ENCODE measurements at regions of chr5 and their contacts with region 1.

Region 1: GRCh38 chr5:143279698-143280097 is 123.8 kb downstream of the NR3C1 start:
- DNase-seq: no peak
- ATAC-seq: no peak
- H3K4me3 ChIP-seq: no peak overlapping the region
- H3K27ac ChIP-seq: no peak overlapping the region
- H3K4me1 ChIP-seq: peaks cover 0 to 9% (median 0%) of the 10 kb centered on the region in 12 donors
- H3K27me3 ChIP-seq: no peaks in the 10 kb centered on the region
- CTCF ChIP-seq: no peak
- POLR2A ChIP-seq: no peak

Region 2: GRCh38 chr5:142446131-142446959 is 833.4 kb before region 1 on chr5:
- intact Hi-C with region 1: no loop called
- DNase-seq: no peak
- ATAC-seq: peak; percentile 22 to 62 (median 46)
- H3K4me3 ChIP-seq: no peak overlapping the region
- H3K27ac ChIP-seq: peak overlapping the region in 10 of 12 donors; percentile 0 to 73 (median 55)
- H3K4me1 ChIP-seq: peaks cover 0 to 28% (median 12%) of the 10 kb centered on the region in 12 donors
- H3K27me3 ChIP-seq: no peaks in the 10 kb centered on the region
- CTCF ChIP-seq: no peak
- POLR2A ChIP-seq: no peak

Region 3: GRCh38 chr5:143222287-143223231 is 57.1 kb before region 1 on chr5:
- intact Hi-C with region 1: loop called in 1 of 10 experiments (anchors 10 kb)
- DNase-seq: no peak
- ATAC-seq: peak in 3 of 4 donors; percentile 20 to 29 (median 25)
- H3K4me3 ChIP-seq: no peak overlapping the region
- H3K27ac ChIP-seq: peak overlapping the region in 1 of 12 donors; percentile 38
- H3K4me1 ChIP-seq: peaks cover 0 to 52% (median 16%) of the 10 kb centered on the region in 12 donors
- H3K27me3 ChIP-seq: no peaks in the 10 kb centered on the region
- CTCF ChIP-seq: no peak
- POLR2A ChIP-seq: no peak